GM12878 (cell line): ENCODE measurements at regions of chr10 and their contacts with region 1.

Region 1: DNA sequence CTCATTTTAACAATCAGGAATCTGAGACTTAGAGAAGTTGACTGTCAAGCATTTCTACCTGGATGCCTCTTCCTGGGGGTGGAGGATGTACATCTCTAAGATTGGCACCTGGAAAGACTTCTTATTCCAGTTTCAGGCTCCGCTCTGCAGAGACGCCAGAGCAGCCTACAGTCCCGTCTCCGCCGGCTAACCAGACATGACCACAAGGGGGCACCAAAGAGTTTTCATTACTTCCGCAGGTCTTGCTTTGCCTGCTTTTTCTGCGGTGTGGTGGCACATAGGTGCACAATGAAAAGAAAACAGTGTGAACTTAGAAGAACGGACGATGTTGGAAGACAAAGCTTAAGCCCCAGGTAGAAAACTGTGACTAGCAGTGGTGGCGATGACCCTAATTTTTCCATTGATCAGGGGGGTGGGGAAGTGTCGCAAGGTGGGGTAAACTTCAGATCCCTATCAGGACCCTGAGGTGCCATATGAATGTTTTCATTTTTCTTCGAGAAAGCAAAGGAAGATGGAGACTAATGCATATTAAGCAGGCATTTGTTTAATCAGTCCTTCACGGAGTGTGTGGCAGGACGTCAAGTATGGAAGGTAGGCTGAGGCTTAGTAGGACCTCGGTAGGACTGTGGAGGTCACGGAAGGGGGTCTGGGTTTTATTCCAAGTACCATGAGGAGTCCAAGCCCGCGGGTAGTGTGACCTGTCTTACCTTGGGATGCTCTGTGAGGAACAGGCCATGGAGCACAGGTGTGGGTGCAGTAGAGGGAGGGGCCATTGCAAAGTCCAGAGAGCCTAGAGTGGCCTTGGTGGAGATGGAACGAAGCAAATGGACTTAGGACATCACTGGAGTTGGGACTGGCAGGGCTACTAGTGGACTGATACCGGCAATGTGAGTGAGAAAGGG is 60.1 kb upstream of the SORCS3 start:
- DNase-seq: peak; percentile 1
- ATAC-seq: peak; percentile 94
- H3K4me3 ChIP-seq: no peak overlapping the region
- H3K27ac ChIP-seq: no peak overlapping the region
- H3K4me1 ChIP-seq: no peaks in the 10 kb centered on the region
- H3K27me3 ChIP-seq: no peaks in the 10 kb centered on the region
- CTCF ChIP-seq: peak; percentile 75 to 88 (median 81)
- EP300 ChIP-seq: no peak
- POLR2A ChIP-seq: no peak
- RAD21 ChIP-seq: peak; percentile 65

Region 2: GRCh38 chr10:103659674-103660363 is 921.2 kb before region 1 on chr10:
- CTCF ChIA-PET with region 1: no interaction called
- POLR2A ChIA-PET with region 1: no interaction called
- RAD21 ChIA-PET with region 1: no interaction called
- SMC1A ChIA-PET with region 1: no interaction called
- in situ Hi-C with region 1: no loop called
- intact Hi-C with region 1: no loop called
- DNase-seq: no peak
- ATAC-seq: peak; percentile 94
- H3K4me3 ChIP-seq: peak overlapping the region; percentile 20; the same call in 1 of the 2 replicates
- H3K27ac ChIP-seq: peak overlapping the region; percentile 50
- H3K4me1 ChIP-seq: peaks cover 8% of the 10 kb centered on the region
- H3K27me3 ChIP-seq: no peaks in the 10 kb centered on the region
- CTCF ChIP-seq: no peak
- EP300 ChIP-seq: no peak
- POLR2A ChIP-seq: no peak; the same call in 1 of the 2 replicates
- RAD21 ChIP-seq: no peak

Region 3: DNA sequence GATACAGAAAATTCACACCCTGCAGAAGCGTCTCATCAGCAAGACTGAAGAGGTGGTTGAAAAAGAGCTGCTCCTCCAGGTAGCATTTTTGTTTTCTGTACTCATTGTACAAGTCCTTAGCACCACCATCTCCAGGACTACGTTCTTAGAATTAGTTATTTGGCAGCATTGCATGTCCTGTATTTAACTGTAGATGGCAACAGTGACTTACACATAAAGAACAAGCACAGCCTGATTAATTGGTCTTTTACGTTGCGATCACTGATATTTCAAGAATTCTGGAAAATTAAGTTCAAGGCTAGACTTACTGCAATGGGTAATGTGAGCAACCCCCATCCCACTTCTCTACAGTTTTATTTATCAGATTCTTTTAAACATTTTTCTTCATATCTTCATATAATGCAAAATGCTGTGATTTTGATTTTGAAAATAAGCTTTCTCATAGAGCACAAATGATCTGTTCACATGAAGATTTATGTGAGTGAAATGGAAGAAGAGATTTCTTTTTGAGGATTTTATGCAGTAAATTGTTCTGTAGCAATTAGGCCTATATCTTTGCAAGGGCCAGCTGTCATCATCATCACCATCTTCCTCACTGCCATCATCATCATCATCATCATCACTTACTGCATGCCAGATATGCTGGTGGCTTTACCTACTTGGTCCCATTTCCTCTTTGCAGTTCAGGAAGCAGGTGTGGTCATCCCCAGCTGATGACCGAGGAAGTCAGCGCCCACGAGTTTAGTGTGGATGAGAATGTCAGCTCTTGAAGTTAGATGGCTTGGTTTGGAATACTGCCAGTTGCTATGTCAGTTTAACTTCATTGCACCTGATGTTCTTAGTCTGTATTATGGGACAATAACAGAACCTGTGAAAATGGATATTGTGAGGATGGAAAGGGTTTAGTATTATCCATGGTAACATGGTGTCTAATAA is 174.0 kb before region 1 on chr10:
- CTCF ChIA-PET with region 1: no interaction called
- POLR2A ChIA-PET with region 1: no interaction called
- RAD21 ChIA-PET with region 1: no interaction called
- SMC1A ChIA-PET with region 1: no interaction called
- in situ Hi-C with region 1: no loop called
- intact Hi-C with region 1: loop called (anchors 10 kb)
- DNase-seq: no peak
- ATAC-seq: peak; percentile 46; the same call in 2 of the 3 replicates
- H3K4me3 ChIP-seq: no peak overlapping the region
- H3K27ac ChIP-seq: no peak overlapping the region
- H3K4me1 ChIP-seq: no peaks in the 10 kb centered on the region
- H3K27me3 ChIP-seq: no peaks in the 10 kb centered on the region; a peak in 1 of 4 replicates
- CTCF ChIP-seq: peak; percentile 27 to 53 (median 41); a peak in 5 of 6 replicates
- EP300 ChIP-seq: no peak
- POLR2A ChIP-seq: no peak
- RAD21 ChIP-seq: peak; percentile 72

Region 4: GRCh38 chr10:104777086-104777799 is 196.2 kb after region 1 on chr10:
- CTCF ChIA-PET with region 1: interaction called, 3 read pairs
- POLR2A ChIA-PET with region 1: no interaction called
- RAD21 ChIA-PET with region 1: no interaction called
- SMC1A ChIA-PET with region 1: no interaction called
- in situ Hi-C with region 1: no loop called
- intact Hi-C with region 1: loop called (anchors 2 kb)
- DNase-seq: no peak
- ATAC-seq: peak; percentile 44
- H3K4me3 ChIP-seq: no peak overlapping the region
- H3K27ac ChIP-seq: no peak overlapping the region
- H3K4me1 ChIP-seq: no peaks in the 10 kb centered on the region
- H3K27me3 ChIP-seq: no peaks in the 10 kb centered on the region
- CTCF ChIP-seq: peak in 1 of 3 experiments; percentile 7; a peak in 1 of 6 replicates
- EP300 ChIP-seq: no peak
- POLR2A ChIP-seq: no peak
- RAD21 ChIP-seq: no peak

Region 5: GRCh38 chr10:105691811-105692210 is 1110.8 kb after region 1 on chr10:
- CTCF ChIA-PET with region 1: no interaction called
- POLR2A ChIA-PET with region 1: no interaction called
- RAD21 ChIA-PET with region 1: no interaction called
- SMC1A ChIA-PET with region 1: no interaction called
- in situ Hi-C with region 1: no loop called
- intact Hi-C with region 1: loop called (anchors 5 kb)
- DNase-seq: no peak
- ATAC-seq: peak; percentile 52; the same call in 1 of the 3 replicates
- H3K4me3 ChIP-seq: no peak overlapping the region
- H3K27ac ChIP-seq: no peak overlapping the region
- H3K4me1 ChIP-seq: no peaks in the 10 kb centered on the region
- H3K27me3 ChIP-seq: no peaks in the 10 kb centered on the region
- CTCF ChIP-seq: peak; percentile 10 to 45 (median 16); a peak in 4 of 6 replicates
- EP300 ChIP-seq: no peak
- POLR2A ChIP-seq: no peak
- RAD21 ChIP-seq: peak; percentile 56